ENCODE measurements at regions of chr1 and their contacts with region 1.

Region 1: DNA sequence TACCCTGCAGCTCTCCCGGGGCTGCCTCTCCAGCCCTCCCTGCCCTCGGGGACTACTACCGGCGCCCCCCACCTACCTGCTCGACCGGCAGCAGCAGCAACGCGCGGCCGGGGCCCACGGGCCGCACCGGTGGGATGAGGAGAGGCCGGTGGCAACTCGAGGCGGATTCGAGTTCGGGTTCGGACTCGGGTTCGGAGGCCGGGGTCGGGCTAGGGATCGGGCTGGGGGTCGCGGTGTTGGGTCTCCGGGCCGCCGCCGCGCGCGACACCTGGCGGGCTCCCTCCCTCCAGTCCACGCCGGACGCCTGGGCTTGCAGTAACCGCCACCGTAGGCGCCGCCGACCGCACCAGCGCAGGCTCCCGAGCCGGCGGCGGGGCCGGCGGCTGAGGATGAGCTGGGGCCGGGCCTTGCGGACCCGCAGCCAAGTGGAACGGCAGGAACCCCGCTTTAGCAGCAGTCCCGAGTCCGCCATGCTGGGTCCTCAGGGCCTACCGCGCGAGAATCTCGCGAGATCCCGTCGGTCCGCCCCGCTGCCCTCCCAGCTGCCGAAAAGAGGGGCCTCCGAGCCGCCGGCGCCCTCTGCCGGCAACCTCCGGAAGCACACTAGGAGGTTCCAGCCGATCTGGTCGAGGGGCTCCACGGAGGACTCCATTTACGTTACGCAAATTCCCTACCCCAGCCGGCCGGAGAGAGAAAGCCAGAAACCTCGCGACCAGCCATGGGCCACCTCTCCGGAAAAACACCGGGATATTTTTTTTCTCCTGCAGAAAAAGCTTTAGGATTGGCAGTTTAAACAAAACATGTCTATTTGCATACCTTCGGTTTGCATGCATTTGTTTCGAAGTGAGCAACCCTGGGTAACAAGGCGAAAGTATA is at the start of gene NOL9:
- DNase-seq: peak; percentile 98
- ATAC-seq: peak; percentile 95
- total RNA-seq, gene NOL9: 12.6 TPM

Region 2: GRCh38 chr1:6587261-6588005 is 33.2 kb after region 1 on chr1:
- intact Hi-C with region 1: no loop called
- DNase-seq: peak; percentile 87
- ATAC-seq: peak; percentile 79

Region 3: DNA sequence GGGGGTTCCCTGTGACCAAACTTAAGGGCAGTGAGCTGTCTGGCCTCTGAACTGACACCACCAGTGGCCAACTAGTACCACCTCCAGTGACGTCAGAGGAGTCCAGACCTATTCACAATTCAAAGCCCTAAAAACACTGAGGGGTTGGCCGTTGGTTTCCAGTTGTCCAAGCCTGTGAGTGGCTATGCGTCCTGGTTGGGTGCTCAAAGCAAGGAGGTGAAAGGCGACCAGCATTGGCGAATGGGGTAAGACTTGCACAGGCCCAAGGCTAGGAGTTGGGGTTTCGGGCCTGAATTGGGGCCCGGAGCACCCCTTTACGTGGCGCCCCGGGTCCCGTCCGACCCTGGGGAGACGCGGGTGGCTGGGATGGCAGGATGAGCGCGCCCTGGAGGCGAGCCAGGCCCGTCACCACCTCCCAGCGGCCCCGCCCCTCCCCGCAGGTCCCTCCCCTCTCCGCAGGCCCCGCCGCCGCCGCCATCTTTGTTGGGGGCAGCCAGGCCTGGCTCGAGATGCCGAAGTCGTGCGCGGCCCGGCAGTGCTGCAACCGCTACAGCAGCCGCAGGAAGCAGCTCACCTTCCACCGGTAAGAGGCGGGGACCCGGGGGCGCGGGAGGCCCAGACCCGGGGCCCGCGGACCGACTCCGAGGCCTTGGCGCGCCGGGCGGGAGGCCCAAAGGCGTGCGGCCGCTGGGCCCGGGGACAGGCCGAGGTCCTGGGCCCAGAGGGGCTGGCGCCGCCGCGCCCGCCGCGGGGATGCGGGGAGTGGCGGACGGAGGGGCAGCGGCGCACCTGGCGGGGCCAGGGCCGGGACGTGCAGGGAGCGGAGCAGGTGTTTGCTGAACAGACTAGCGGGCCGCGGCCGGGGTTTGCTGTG is 70.7 kb after region 1 on chr1 and contains the start of gene THAP3:
- intact Hi-C with region 1: loop called (anchors 5 kb)
- DNase-seq: peak; percentile 97
- ATAC-seq: peak; percentile 92
- total RNA-seq, gene THAP3: 12.5 TPM

Measured in Right ventricle myocardium inferior (tissue), 1 donor.